RWPE1 (cell line): ENCODE measurements at regions of chr11 and their contacts with region 1.

Region 1: GRCh38 chr11:128884703-128885338 is 6.3 kb upstream of the KCNJ5 start:
- DNase-seq: peak; percentile 80
- H3K27ac ChIP-seq: no peak overlapping the region
- CTCF ChIP-seq: peak; percentile 84

Region 2: DNA sequence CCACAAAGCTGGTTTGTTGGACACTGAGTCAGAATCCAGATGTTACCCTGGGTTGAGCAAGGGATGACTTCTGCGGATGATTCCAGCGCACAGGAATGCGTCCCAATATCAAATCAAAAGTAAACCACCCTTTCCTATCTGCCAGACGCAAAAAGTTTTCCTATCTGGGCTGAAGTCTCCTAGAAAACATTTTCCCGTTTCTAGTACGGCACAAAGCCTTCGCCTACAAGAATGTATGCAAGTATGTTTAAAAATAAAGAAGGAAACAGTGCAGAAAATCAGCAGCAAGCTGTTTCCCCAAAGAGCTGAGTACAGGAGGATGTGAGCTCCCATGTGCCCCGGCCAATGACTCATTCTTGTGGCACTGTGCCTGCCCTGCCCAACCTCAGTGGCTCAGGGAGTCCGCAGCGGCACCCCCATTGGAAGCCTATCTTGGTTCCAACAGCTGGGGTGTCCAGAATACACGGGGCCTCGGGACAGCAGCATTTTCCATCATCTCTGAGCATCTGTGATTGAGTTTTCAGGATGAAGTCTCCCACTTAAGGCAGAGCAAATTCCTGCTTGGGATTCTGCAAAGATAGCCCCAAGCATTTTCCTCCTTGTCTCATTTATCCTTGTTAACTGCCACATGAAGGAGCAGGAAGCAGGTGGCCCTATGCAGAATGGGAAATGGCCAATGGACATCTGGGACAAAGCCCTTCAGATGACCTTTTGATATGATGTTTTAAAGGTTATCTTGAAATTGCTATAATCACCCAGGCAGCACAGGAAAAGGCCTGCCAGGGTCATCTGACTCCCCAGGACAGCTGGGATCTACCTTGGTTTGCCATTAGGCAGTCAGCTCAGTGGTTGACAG is 23.8 kb after region 1 on chr11:
- CTCF ChIA-PET with region 1: interaction called, 10 read pairs
- POLR2A ChIA-PET with region 1: no interaction called
- DNase-seq: peak; percentile 88
- H3K27ac ChIP-seq: peak overlapping the region; percentile 98
- CTCF ChIP-seq: no peak

Region 3: DNA sequence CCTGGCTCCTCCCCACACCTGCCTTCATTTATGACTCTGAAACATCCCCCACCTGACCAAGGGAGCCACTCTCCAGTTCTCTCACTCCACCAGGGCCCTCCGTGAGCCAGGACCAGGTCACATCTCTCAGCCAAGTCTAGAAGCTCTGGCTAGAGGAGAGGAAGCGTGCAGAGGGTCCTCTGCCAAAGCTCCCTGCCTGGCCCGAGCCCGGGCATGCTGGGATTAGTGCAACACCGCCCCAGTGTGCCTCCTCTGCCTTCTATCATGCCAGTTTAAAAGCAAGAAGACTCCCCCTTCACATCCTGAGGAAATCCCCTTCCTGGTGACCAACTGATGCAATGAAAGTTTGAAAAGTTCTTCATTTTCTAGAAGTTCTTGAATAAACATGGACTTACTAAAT is 34.4 kb after region 1 on chr11:
- CTCF ChIA-PET with region 1: no interaction called
- POLR2A ChIA-PET with region 1: no interaction called
- DNase-seq: no peak
- H3K27ac ChIP-seq: peak overlapping the region; percentile 30
- CTCF ChIP-seq: no peak

Region 4: GRCh38 chr11:128948589-128948988 is 63.8 kb after region 1 on chr11:
- CTCF ChIA-PET with region 1: interaction called, 20 read pairs
- POLR2A ChIA-PET with region 1: no interaction called
- DNase-seq: peak; percentile 16
- H3K27ac ChIP-seq: no peak overlapping the region
- CTCF ChIP-seq: no peak

Region 5: GRCh38 chr11:128956401-128957201 is 71.8 kb after region 1 on chr11:
- CTCF ChIA-PET with region 1: interaction called, 103 read pairs
- POLR2A ChIA-PET with region 1: no interaction called
- DNase-seq: peak; percentile 77
- H3K27ac ChIP-seq: no peak overlapping the region
- CTCF ChIP-seq: peak; percentile 54